GM18951 (cell line): ENCODE measurements at regions of chr5 and their contacts with region 1.

Region 1: DNA sequence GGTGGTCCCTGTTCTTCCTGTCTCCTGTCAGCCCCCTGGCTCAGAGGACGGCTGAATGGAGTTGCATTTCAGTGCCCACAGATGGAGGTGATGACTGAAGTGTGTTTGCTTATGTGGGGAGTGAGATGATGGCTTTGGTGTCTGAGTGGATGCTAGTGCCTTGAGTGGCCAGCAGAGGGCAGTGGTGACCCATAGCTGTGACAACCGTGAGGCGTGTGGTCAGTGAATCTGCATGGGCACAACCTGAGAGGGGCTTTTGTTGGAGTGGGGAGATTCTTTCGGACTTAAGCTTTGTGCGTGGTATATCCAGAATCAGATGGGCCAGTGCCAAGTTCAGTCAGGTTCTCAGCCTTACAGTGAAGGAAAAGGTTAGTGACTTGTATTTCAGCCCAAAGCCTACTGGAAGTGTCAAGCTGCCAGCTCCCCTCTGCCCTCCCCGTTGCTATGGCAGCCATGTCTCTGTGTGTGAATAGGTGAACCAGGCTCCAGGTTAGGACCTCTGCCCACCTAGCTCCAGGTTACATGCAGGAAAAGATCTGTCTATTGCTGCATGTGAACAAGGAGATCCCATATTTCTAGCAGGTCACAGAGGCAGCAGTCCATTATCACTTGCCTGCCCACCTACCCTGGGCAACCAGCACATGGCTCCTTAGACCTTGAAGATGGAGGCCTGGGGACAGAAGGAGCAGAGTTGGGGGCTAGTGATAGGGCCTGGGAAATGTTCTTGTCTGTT is 14.7 kb upstream of the CXXC5 start:
- POLR2A ChIP-seq: peak; percentile 31

Region 2: GRCh38 chr5:139763930-139764791 is 130.7 kb after region 1 on chr5:
- in situ Hi-C with region 1: loop called (anchors 5 kb)
- POLR2A ChIP-seq: no peak